MCF 10A (cell line): ENCODE measurements at regions of chr22 and their contacts with region 1.

Region 1: GRCh38 chr22:46377566-46378425 is 42.3 kb downstream of the TRMU start:
- DNase-seq: peak; percentile 43
- H3K4me3 Mint-ChIP-seq: no peak overlapping the region
- H3K27ac Mint-ChIP-seq: no peak overlapping the region
- H3K4me1 Mint-ChIP-seq: peaks cover 4% of the 10 kb centered on the region
- H3K27me3 Mint-ChIP-seq: no peaks in the 10 kb centered on the region
- CTCF ChIP-seq: no peak

Region 2: DNA sequence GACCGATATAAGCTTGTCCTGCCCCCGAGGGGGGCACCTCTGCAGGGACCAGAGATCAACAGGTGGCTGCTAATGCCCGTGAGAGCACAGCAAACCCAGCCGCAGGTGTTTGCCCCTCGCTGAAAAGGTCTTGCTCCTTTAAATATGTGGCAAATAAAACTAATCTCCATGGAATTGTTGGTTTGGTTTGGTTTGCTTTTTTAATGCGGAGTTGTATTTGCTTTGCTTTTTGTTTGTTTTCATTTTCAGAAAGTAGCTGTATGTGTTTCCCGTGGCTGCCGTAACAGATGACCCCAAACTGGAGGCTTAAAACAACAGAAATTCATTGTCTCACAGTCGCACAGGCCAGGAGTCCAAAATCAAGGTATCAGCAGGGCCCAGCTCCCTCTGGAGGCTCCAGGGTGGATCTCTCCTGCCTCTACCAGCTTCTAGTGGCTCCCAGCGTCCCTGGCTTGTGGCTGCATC is 66.6 kb after region 1 on chr22:
- CTCF ChIA-PET with region 1: no interaction called
- POLR2A ChIA-PET with region 1: no interaction called
- intact Hi-C with region 1: no loop called
- DNase-seq: no peak
- H3K4me3 Mint-ChIP-seq: no peak overlapping the region
- H3K27ac Mint-ChIP-seq: no peak overlapping the region
- H3K4me1 Mint-ChIP-seq: no peaks in the 10 kb centered on the region
- H3K27me3 Mint-ChIP-seq: no peaks in the 10 kb centered on the region
- CTCF ChIP-seq: no peak

Region 3: DNA sequence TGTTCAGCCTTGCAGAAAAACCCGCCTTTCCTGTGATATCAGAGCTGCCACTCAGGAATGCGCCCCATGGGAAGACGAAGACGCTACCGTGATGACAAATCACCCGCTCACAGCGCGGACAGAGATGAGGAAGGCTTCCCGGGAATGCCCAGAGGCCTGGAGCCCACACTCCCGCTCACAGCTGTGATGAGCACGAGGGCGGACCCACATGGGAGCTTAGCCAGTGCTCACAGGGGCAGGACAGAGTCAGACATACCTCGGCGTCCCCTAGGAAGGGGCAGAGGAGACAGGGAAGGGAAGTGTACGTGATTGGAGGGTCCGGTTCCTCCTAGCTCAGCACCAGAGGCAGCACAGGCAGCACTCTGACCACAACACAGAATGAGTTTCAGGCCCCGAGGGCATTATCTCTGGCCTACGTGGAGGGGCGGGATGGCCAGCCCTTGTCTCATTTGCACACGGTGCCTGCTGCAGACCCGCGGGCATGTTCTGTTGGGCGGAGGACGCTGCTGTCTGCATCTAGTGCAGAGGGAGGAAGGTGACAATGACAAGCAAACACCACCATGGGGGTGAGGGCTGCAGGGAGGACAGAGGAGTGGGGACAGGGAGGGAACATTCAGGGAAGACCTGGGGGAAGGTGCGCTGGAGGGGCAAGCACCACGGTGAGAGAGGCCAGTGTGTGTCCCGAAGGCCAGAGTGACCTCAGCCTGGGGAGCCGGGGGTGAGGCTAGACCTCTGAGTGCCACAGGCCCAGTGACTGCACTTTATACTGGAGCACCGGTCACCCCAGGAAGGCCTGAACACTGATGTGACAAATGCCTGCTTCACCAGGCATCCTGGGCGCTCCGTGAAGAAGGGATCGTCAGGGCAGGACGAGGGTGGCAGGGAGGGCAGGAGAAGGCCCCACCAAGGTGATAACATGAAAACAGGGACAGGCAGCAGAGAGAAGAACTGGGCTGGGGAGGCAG is 80.0 kb after region 1 on chr22:
- CTCF ChIA-PET with region 1: no interaction called
- POLR2A ChIA-PET with region 1: no interaction called
- intact Hi-C with region 1: loop called (anchors 10 kb)
- DNase-seq: peak; percentile 56
- H3K4me3 Mint-ChIP-seq: peak overlapping the region; percentile 25
- H3K27ac Mint-ChIP-seq: peak overlapping the region; percentile 53
- H3K4me1 Mint-ChIP-seq: peaks cover 38% of the 10 kb centered on the region
- H3K27me3 Mint-ChIP-seq: no peaks in the 10 kb centered on the region
- CTCF ChIP-seq: no peak

Region 4: GRCh38 chr22:46514592-46515207 is 136.9 kb after region 1 on chr22:
- CTCF ChIA-PET with region 1: no interaction called
- POLR2A ChIA-PET with region 1: no interaction called
- intact Hi-C with region 1: no loop called
- DNase-seq: peak; percentile 93
- H3K4me3 Mint-ChIP-seq: peak overlapping the region; percentile 19
- H3K27ac Mint-ChIP-seq: peak overlapping the region; percentile 88
- H3K4me1 Mint-ChIP-seq: peaks cover 23% of the 10 kb centered on the region
- H3K27me3 Mint-ChIP-seq: no peaks in the 10 kb centered on the region
- CTCF ChIP-seq: no peak